ENCODE measurements at regions of chr4 and their contacts with region 1.

Region 1: GRCh38 chr4:16443504-16444088 is 217.3 kb upstream of the TAPT1 start:
- DNase-seq: peak; percentile 65
- H3K4me3 Mint-ChIP-seq: no peak overlapping the region
- H3K27ac Mint-ChIP-seq: no peak overlapping the region
- H3K4me1 Mint-ChIP-seq: no peaks in the 10 kb centered on the region
- H3K27me3 Mint-ChIP-seq: peaks cover 83% of the 10 kb centered on the region
- CTCF ChIP-seq: peak; percentile 63

Region 2: GRCh38 chr4:16302619-16303018 is 141.0 kb before region 1 on chr4:
- CTCF ChIA-PET with region 1: interaction called, 100 read pairs
- POLR2A ChIA-PET with region 1: no interaction called
- intact Hi-C with region 1: no loop called
- DNase-seq: no peak
- H3K4me3 Mint-ChIP-seq: no peak overlapping the region
- H3K27ac Mint-ChIP-seq: no peak overlapping the region
- H3K4me1 Mint-ChIP-seq: no peaks in the 10 kb centered on the region
- H3K27me3 Mint-ChIP-seq: peaks cover 15% of the 10 kb centered on the region
- CTCF ChIP-seq: no peak

Region 3: DNA sequence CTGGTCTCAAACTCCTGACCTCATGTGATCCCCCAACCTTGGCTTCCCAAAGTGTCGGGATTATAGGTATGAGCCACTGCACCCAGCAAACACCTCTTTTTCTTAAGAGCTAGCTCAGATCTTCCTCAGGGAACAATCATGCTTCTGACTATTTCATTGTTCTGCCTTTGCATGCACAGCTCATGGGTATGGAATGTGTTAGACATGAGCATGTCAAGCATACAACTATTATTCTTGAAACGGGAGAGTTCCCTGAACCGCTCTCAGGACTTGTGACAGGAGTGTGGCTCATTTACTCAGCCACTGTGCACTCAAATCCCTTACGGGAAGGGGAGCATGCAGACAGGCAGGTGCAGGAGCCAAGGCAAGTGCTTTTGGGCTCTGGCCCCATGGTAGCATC is 14.3 kb after region 1 on chr4:
- CTCF ChIA-PET with region 1: interaction called, 24 read pairs
- POLR2A ChIA-PET with region 1: interaction called, 4 read pairs
- intact Hi-C with region 1: no loop called
- DNase-seq: peak; percentile 16
- H3K4me3 Mint-ChIP-seq: no peak overlapping the region
- H3K27ac Mint-ChIP-seq: no peak overlapping the region
- H3K4me1 Mint-ChIP-seq: peaks cover 13% of the 10 kb centered on the region
- H3K27me3 Mint-ChIP-seq: peaks cover 48% of the 10 kb centered on the region
- CTCF ChIP-seq: no peak

Measured in MCF 10A (cell line).